Gastrocnemius medialis (tissue), 4 donors: ENCODE measurements at regions of chr19 and their contacts with region 1.

Region 1: GRCh38 chr19:40777937-40778705 is at the start of gene RAB4B:
- DNase-seq: peak; percentile 100
- ATAC-seq: peak; percentile 92
- H3K4me3 ChIP-seq: peak within 1 kb of the TSS; percentile 79 to 93 (median 89)
- H3K27ac ChIP-seq: peak within 1 kb of the TSS; percentile 93 to 99 (median 98)
- H3K4me1 ChIP-seq: peaks cover 7 to 14% of the 10 kb centered on the region in 2 donors
- H3K27me3 ChIP-seq: no peaks in the 10 kb centered on the region
- CTCF ChIP-seq: peak in 2 of 5 experiments; percentile 25 to 27
- POLR2A ChIP-seq: peak; percentile 76 to 81
- total RNA-seq, gene RAB4B: 14.9 to 27.2 (median 19.7) TPM

Region 2: DNA sequence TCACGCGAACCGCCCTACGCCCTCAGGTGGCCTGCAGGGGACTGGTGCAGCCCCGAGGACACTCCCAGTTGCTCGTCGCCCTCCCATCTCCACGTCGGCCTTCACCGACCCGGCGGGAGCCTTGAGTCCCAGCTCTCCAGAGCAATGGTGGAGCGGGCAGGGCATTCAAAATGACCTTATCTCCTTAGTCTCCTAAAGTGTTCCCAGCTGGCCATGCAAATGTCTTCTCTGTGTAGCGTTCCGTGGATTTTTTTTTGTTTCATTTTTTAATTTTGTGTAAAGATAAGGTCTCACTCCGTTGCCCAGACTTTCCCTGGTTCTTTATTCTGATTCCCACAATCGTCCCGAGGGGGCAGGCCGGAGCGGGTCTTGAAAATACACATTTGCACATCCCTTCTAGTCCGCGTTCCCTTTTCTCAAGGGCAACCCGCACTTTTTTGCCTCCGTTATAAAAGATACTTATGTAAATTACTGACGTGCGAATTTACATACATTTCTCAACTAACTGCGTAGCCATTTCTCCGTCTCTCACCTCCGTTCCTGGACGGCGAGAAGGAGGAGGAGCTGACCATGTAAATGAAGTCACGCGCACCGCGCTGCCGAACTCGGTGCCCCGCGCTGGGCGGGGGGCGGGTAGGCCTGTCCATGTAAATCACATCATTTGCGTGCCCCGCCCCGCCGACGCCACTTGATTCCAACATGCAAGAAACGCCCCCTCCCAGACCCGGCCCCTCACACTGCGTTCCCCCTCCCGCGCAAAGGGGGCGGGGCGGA is 20.3 kb after region 1 on chr19:
- in situ Hi-C with region 1: no loop called
- intact Hi-C with region 1: loop called (anchors 1 kb)
- DNase-seq: peak; percentile 100
- ATAC-seq: peak; percentile 17 to 83
- H3K4me3 ChIP-seq: peak overlapping the region; percentile 55 to 96 (median 63)
- H3K27ac ChIP-seq: peak overlapping the region; percentile 94 to 96 (median 96)
- H3K4me1 ChIP-seq: peaks cover 36 to 42% of the 10 kb centered on the region in 2 donors
- H3K27me3 ChIP-seq: no peaks in the 10 kb centered on the region
- CTCF ChIP-seq: peak; percentile 34 to 51 (median 49)
- POLR2A ChIP-seq: no peak